ENCODE measurements at regions of chr9 and their contacts with region 1.

Region 1: GRCh38 chr9:137029058-137029936 is 1.3 kb upstream of the ABCA2 start:
- DNase-seq: peak; percentile 95
- ATAC-seq: peak; percentile 74
- H3K4me3 Mint-ChIP-seq: peak overlapping the region; percentile 58
- H3K27ac Mint-ChIP-seq: no peak overlapping the region; the same call in 1 of the 2 replicates
- H3K4me1 Mint-ChIP-seq: 0 out of 2 replicates have a peak, but pooled peaks cover 2% of the 10 kb centered on the region
- H3K27me3 Mint-ChIP-seq: peaks cover 17% of the 10 kb centered on the region
- CTCF ChIP-seq: peak; percentile 84

Region 2: DNA sequence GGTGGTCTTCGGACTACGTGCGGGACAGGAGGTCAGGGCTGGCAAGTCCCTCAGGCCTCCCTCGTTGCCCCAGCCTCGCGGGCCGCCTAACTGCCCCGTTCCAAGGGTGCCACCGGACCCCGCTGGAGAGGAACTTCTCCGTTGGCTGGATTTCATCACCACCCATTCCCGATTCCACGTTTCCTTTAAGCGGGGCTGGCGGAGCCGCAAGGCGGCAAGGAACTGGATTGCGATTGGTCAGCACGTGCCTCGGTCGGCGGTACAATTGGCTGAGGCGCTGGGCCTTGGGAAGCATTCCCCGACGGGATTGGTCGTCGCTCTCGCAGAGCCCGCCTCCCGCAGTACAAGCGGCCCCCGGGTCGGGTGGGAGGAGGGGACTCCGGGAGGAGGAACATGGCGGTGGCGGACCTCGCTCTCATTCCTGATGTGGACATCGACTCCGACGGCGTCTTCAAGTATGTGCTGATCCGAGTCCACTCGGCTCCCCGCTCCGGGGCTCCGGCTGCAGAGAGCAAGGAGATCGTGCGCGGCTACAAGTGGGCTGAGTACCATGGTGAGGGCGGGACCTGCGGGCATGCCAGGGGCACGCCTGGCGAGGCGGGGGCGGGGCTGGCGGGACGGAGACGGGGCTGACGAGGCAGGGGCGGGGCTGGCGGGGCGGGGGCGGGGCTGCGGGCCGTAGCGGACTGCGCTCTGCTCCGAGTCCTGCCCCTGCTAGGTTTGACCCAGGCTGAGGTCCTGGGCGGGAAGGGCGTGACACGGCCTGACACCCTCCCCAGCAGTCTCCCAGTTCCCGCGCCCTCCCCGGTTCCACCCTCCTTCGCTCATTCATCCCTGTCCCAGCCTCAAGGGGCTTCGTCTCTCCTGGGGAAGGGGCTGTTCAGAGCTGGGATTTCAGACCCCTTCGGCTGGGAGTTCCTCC is 180.0 kb before region 1 on chr9 and contains the start of gene PHPT1:
- CTCF ChIA-PET with region 1: interaction called, 18 read pairs
- POLR2A ChIA-PET with region 1: no interaction called
- DNase-seq: peak; percentile 99
- ATAC-seq: peak; percentile 75
- H3K4me3 Mint-ChIP-seq: peak within 1 kb of the TSS; percentile 94
- H3K27ac Mint-ChIP-seq: peak within 1 kb of the TSS; percentile 94
- H3K4me1 Mint-ChIP-seq: peaks cover 4% of the 10 kb centered on the region
- H3K27me3 Mint-ChIP-seq: peaks cover 3% of the 10 kb centered on the region
- CTCF ChIP-seq: no peak
- total RNA-seq, gene PHPT1: 138 to 176 TPM (median 173 TPM) in 3 replicates

Region 3: DNA sequence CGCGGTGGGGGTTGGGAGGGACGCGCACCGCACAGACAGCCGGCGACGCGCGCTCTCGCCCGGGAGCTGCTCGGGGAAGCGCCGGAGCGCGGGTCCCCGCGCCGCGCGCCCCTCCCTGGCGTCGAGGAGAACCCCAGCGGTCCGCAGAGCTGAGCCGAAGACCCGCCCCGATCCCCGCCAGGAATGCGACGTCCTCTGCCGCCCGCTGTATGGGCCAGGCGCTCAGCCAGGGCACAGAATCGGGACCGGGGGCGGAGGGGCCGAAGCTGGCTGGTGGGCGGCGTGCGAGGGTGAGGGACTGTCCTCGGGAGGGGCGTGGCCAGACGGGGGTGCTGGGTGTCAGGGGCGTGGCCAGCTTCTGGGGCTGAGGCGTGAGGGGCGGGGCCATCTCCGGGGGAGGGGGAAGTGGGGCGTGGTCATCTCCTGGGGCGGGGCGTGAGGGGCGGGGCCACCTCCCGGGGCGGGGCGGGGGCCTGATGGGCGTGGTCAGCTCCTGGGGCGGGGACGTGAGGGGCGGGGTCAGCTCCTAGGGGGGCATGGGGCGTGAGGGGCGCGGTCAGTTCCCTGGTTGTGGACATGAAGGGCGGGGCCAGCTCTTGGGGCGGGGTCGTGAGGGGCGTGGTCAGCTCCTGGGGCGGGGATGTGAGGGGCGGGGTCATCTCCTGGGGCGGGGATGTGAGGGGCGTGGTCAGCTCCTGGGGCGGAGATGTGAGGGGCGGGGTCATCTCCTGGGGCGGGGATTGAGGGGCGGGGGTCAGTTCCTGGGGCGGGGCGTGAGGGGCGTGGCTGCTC is 51.0 kb before region 1 on chr9:
- CTCF ChIA-PET with region 1: interaction called, 117 read pairs
- POLR2A ChIA-PET with region 1: no interaction called
- DNase-seq: peak; percentile 96
- ATAC-seq: peak; percentile 76
- H3K4me3 Mint-ChIP-seq: peak overlapping the region; percentile 66
- H3K27ac Mint-ChIP-seq: no peak overlapping the region
- H3K4me1 Mint-ChIP-seq: peaks cover 3% of the 10 kb centered on the region; the same call in 1 of the 2 replicates
- H3K27me3 Mint-ChIP-seq: peaks cover 3% of the 10 kb centered on the region; the same call in 1 of the 2 replicates
- CTCF ChIP-seq: no peak

Region 4: GRCh38 chr9:137006116-137007003 is 22.9 kb before region 1 on chr9:
- CTCF ChIA-PET with region 1: interaction called, 23 read pairs
- POLR2A ChIA-PET with region 1: no interaction called
- DNase-seq: no peak
- ATAC-seq: no peak
- H3K4me3 Mint-ChIP-seq: no peak overlapping the region
- H3K27ac Mint-ChIP-seq: no peak overlapping the region
- H3K4me1 Mint-ChIP-seq: no peaks in the 10 kb centered on the region
- H3K27me3 Mint-ChIP-seq: peaks cover 6% of the 10 kb centered on the region; the same call in 1 of the 2 replicates
- CTCF ChIP-seq: no peak

Region 5: GRCh38 chr9:137055385-137056364 is 26.4 kb after region 1 on chr9:
- CTCF ChIA-PET with region 1: interaction called, 60 read pairs
- POLR2A ChIA-PET with region 1: no interaction called
- DNase-seq: no peak
- ATAC-seq: no peak
- H3K4me3 Mint-ChIP-seq: no peak overlapping the region
- H3K27ac Mint-ChIP-seq: no peak overlapping the region
- H3K4me1 Mint-ChIP-seq: 0 out of 2 replicates have a peak, but pooled peaks cover 2% of the 10 kb centered on the region
- H3K27me3 Mint-ChIP-seq: peaks cover 24% of the 10 kb centered on the region
- CTCF ChIP-seq: no peak

Region 6: DNA sequence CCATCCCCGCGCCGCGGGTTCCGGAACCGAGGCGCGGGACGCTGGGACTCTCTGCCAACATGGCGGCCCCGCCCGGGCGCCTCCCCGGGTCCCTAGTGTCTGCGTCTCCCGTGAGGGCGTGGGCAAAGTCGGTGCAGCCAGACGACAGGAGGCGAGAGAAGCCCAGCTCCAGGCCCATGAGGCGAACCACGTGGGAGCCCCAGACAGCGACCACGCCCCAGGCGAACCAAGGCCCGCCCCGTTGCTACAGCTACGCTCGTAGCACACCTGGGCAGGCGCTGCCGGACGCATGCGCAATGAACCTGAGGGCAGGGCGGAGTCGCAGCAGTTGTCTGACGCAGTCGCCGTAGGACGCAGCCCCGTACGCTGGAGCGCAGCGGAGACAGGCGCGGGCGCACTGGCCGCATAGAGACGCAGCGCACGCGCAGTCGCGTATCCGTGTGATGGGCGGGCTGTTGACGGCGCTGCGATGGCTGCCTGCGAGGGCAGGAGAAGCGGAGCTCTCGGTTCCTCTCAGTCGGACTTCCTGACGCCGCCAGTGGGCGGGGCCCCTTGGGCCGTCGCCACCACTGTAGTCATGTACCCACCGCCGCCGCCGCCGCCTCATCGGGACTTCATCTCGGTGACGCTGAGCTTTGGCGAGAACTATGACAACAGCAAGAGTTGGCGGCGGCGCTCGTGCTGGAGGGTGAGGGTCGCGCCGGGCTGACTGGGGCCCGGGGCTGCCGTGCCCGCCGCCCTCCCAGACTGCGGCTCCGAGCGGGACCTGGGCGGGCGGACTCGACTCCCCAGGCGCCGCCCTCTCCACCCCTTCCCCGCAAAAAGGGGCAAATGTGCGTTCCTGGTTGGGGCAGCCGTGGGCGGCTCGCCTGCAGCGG is 57.5 kb after region 1 on chr9 and contains the start of gene MAN1B1:
- CTCF ChIA-PET with region 1: interaction called, 26 read pairs
- POLR2A ChIA-PET with region 1: no interaction called
- DNase-seq: peak; percentile 99
- ATAC-seq: peak; percentile 95
- H3K4me3 Mint-ChIP-seq: peak within 1 kb of the TSS; percentile 85
- H3K27ac Mint-ChIP-seq: peak within 1 kb of the TSS; percentile 91
- H3K4me1 Mint-ChIP-seq: peaks cover 16% of the 10 kb centered on the region
- H3K27me3 Mint-ChIP-seq: peaks cover 9% of the 10 kb centered on the region
- CTCF ChIP-seq: no peak
- total RNA-seq, gene MAN1B1: 44.9 to 57.1 TPM (median 47.1 TPM) in 3 replicates